Prostate gland (tissue), 2 donors: ENCODE measurements at regions of chr3 and their contacts with region 1.

Region 1: DNA sequence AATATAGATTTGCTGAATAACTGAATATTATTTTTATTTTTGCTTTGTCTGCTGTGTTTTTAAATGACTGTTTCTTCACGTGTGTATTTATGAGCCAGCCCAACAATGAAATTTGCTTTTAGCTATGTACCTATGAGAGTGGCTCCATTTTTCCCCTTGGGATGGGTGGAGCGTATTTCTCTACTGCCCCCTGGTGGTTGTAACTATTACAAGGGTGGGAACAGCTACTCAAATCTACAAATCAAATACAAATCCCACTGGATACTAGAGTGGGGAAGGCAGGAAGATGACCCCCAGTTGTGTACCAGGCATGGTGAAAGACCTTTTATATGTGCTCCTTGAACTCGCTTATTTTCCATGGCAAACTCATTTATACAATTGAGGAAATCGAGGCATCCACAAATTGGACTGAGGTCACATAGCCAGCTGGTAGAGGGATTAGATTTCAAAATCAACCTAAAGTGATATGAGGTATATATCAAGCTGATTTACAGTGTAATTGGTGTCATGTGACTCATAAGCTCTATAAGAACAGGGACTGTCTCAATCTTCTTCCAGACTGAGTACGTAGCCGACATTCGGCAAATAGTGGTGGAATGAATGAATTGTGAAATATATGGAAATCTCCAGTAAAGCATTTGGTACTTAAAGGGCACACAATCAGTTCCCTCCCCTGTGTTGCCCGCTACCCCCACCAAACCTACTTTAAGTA is 69.5 kb upstream of the VEPH1 start:
- DNase-seq: peak; percentile 45
- H3K4me3 ChIP-seq: no peak overlapping the region
- H3K27ac ChIP-seq: no peak overlapping the region
- H3K4me1 ChIP-seq: no peaks in the 10 kb centered on the region
- H3K27me3 ChIP-seq: no peaks in the 10 kb centered on the region
- CTCF ChIP-seq: peak; percentile 44 to 81 (median 64)
- POLR2A ChIP-seq: no peak

Region 2: DNA sequence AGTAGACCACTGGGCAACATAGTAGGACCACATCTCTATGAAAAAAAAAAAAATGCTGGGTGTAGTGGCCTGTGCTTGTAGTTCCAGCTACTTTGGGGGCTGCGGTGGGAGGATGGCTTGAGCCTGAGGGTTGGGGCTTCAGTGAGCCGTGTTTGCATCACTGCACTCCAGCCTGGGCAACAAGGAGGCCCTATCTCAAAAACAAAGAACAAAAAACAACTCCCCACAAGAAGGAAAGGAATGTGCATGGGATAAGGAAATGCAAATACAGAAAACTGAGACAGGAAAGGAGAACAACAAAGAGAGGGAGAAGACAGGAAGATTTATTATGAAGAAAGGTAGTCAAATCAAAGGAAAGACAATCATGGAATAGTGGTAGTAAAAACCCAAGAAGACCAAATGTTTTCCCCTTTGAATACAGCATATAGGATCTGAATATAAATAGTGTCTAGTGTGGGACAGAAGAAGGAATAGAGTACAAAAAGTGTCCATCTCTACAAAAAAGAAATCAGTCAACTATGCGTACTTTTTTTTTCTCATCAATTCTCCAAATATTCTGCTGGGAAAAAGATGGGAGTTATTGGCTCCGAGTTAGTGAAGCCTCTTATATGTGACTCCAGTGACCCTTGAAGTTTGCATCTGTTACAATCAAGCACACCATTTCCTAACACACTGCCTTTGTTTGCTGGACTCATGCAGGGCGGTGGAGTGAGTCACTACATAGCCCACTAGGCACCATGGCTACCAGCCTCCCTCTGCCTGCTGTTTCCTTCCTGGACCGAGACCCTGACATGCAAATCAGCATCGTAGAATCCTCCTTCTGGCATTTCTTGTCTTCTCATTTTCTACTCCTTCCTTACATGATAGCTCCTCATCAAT is 237.3 kb before region 1 on chr3:
- intact Hi-C with region 1: no loop called
- DNase-seq: no peak
- H3K4me3 ChIP-seq: no peak overlapping the region
- H3K27ac ChIP-seq: no peak overlapping the region
- H3K4me1 ChIP-seq: no peaks in the 10 kb centered on the region
- H3K27me3 ChIP-seq: no peaks in the 10 kb centered on the region
- CTCF ChIP-seq: no peak
- POLR2A ChIP-seq: no peak

Region 3: GRCh38 chr3:157460253-157460652 is 112.5 kb before region 1 on chr3:
- intact Hi-C with region 1: no loop called
- DNase-seq: no peak
- H3K4me3 ChIP-seq: no peak overlapping the region
- H3K27ac ChIP-seq: no peak overlapping the region
- H3K4me1 ChIP-seq: no peaks in the 10 kb centered on the region
- H3K27me3 ChIP-seq: no peaks in the 10 kb centered on the region
- CTCF ChIP-seq: no peak
- POLR2A ChIP-seq: no peak

Region 4: GRCh38 chr3:157532529-157533297 is 40.0 kb before region 1 on chr3:
- intact Hi-C with region 1: loop called (anchors 2 kb)
- DNase-seq: peak; percentile 32
- H3K4me3 ChIP-seq: no peak overlapping the region
- H3K27ac ChIP-seq: no peak overlapping the region
- H3K4me1 ChIP-seq: no peaks in the 10 kb centered on the region
- H3K27me3 ChIP-seq: no peaks in the 10 kb centered on the region
- CTCF ChIP-seq: peak in 3 of 4 experiments; percentile 70 to 75 (median 72)
- POLR2A ChIP-seq: no peak